Activated B cell treated with CpG ODN at 0.5 μM for 24 hours (primary cell): ENCODE measurements at regions of chr5 and their contacts with region 1.

Region 1: GRCh38 chr5:73448463-73449136 is at the start of gene FOXD1:
- DNase-seq: peak; percentile 54
- ATAC-seq: peak; percentile 61
- H3K4me3 Mint-ChIP-seq: peak within 1 kb of the TSS; percentile 88
- H3K27ac Mint-ChIP-seq: peak within 1 kb of the TSS; percentile 50
- H3K4me1 Mint-ChIP-seq: peaks cover 16% of the 10 kb centered on the region
- H3K27me3 Mint-ChIP-seq: peaks cover 63% of the 10 kb centered on the region
- CTCF ChIP-seq: no peak
- total RNA-seq, gene FOXD1: 0.09 and 0.10 TPM in 2 replicates

Region 2: DNA sequence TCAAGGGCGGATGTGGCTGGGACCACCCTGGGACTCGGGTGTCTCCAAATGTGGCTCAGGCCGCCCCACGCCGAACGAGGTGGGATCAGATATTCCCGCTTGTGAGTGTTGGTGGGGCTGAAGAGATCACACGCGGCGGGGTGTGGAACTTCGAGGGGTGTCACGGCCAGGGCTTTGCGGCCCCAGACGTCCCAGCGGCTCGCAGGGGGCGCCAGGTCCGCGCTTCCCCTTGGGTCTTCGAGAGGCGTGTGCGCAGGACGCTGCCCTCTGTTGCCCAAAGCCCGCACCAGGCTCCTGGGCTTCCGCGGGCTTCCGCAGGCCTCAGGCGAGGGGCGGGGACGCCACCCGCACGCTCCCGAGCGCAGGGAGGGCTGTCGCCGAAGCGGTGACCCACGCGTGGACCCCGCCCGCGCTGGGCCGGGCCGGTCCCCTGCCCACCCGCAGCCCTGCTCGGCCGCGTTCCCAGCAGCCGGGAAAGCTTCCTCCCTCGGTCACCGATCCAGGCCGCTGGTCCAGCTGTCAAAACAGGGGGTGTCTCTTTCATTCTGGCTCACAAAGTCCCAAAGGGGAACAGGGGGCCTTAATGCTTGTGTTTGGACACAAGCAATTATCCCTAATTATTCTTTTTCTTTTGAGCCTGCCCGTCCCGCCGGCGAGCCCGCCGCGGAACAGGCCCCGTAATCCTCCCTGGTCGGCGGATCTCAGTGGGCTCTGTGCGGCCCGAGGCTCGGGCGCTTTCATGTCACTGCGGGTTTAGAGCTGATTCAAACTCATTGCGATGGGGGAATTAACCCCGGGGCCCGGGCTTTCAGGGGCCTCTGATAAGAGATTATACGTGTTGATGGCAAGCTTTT is 215.0 kb before region 1 on chr5:
- CTCF ChIA-PET with region 1: no interaction called
- POLR2A ChIA-PET with region 1: no interaction called
- intact Hi-C with region 1: loop called (anchors 5 kb)
- DNase-seq: no peak
- ATAC-seq: no peak
- H3K4me3 Mint-ChIP-seq: peak overlapping the region; percentile 63
- H3K27ac Mint-ChIP-seq: no peak overlapping the region
- H3K4me1 Mint-ChIP-seq: peaks cover 25% of the 10 kb centered on the region
- H3K27me3 Mint-ChIP-seq: peaks cover 53% of the 10 kb centered on the region
- CTCF ChIP-seq: no peak

Region 3: GRCh38 chr5:73280821-73281746 is 167.5 kb before region 1 on chr5:
- CTCF ChIA-PET with region 1: no interaction called
- POLR2A ChIA-PET with region 1: no interaction called
- intact Hi-C with region 1: no loop called
- DNase-seq: no peak
- ATAC-seq: no peak
- H3K4me3 Mint-ChIP-seq: no peak overlapping the region
- H3K27ac Mint-ChIP-seq: no peak overlapping the region
- H3K4me1 Mint-ChIP-seq: no peaks in the 10 kb centered on the region
- H3K27me3 Mint-ChIP-seq: peaks cover 35% of the 10 kb centered on the region
- CTCF ChIP-seq: no peak

Region 4: GRCh38 chr5:73298772-73299630 is 149.6 kb before region 1 on chr5:
- CTCF ChIA-PET with region 1: no interaction called
- POLR2A ChIA-PET with region 1: no interaction called
- intact Hi-C with region 1: loop called (anchors 2 kb)
- DNase-seq: no peak
- ATAC-seq: no peak
- H3K4me3 Mint-ChIP-seq: no peak overlapping the region
- H3K27ac Mint-ChIP-seq: no peak overlapping the region
- H3K4me1 Mint-ChIP-seq: peaks cover 17% of the 10 kb centered on the region
- H3K27me3 Mint-ChIP-seq: peaks cover 81% of the 10 kb centered on the region
- CTCF ChIP-seq: no peak

Region 5: DNA sequence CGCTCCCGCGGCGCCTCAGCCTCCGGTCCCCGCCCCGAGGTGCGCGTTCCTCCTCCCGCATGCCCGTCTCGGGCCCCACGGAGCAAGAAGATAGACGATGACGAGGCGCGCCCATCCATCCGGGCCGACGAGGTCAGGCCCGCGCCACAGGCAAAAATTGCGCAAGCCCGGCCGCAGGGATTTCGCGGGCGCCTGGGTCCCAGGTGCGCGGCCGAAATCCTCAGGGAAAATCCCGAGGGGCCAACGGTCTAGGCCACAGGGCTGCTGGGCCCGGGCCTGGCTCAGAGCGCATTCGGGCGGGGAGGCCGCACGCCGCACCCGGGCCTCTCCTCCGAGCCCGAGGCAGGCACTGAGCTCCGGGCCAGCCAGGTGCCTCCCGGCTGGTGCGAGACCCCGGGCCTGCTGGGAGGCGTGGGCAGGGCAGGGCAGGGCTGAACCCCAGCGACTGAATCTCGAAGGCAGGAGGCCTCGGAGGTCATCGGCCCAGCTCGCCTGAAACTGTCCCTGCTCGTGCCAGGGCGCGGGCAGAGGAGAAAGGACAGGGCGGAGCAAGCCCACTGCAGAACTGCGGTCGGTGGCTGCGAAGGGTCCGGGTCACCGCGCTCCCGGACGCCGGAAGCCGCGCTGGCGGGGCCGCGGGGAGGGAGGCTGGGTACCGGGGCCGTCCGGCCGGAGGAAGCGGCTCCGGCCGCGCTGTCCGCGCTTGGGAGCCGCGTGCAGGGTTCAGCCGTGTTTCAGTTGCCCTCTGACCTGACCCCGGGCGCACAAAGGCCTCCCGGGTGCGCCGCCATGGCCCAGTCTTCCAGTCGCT is 66.8 kb before region 1 on chr5:
- CTCF ChIA-PET with region 1: no interaction called
- POLR2A ChIA-PET with region 1: no interaction called
- intact Hi-C with region 1: loop called (anchors 5 kb)
- DNase-seq: no peak
- ATAC-seq: no peak
- H3K4me3 Mint-ChIP-seq: no peak overlapping the region
- H3K27ac Mint-ChIP-seq: no peak overlapping the region
- H3K4me1 Mint-ChIP-seq: no peaks in the 10 kb centered on the region
- H3K27me3 Mint-ChIP-seq: peaks cover 64% of the 10 kb centered on the region
- CTCF ChIP-seq: no peak

Region 6: DNA sequence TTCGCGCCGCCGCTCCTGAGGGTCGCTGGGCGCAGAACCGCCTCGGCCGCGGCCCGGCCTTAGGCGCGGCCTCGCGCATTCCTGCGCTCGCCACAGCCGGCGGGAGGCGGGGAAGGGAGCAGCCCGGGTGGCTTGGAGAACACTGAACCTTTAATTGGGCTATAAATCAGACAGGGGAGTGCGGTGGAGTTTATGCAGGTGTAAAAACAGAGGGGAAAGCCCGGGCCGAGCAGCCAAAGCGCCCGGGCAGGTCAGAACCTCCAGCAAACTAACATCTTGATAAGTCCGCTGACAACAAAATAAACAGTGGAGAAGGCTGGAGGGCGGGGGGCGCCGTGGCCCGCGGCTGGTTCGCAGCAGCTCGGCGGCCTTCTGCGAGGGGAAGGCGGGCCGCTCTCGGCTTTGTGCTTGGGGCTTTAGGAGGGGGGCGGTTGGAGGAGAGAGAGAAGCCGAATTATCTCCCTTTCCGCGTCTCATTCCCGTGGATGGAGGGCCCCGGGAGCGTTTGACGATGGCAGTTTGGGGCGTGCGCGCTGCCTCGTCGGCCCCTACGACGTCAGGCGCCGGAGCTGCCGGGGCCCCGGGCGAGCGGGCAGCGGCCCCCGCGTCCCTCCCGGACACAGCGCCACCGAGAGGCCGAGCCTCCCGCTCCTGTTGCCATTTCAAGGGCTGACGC is 11.4 kb before region 1 on chr5:
- CTCF ChIA-PET with region 1: no interaction called
- POLR2A ChIA-PET with region 1: no interaction called
- intact Hi-C with region 1: loop called (anchors 1 kb)
- DNase-seq: no peak
- ATAC-seq: no peak
- H3K4me3 Mint-ChIP-seq: peak overlapping the region; percentile 63
- H3K27ac Mint-ChIP-seq: no peak overlapping the region
- H3K4me1 Mint-ChIP-seq: peaks cover 10% of the 10 kb centered on the region
- H3K27me3 Mint-ChIP-seq: peaks cover 62% of the 10 kb centered on the region
- CTCF ChIP-seq: no peak

Region 7: GRCh38 chr5:73498057-73499008 is 49.7 kb after region 1 on chr5 and contains the start of gene BTF3:
- CTCF ChIA-PET with region 1: no interaction called
- POLR2A ChIA-PET with region 1: interaction called, 7 read pairs
- intact Hi-C with region 1: loop called (anchors 1 kb)
- DNase-seq: peak; percentile 88
- ATAC-seq: peak; percentile 96
- H3K4me3 Mint-ChIP-seq: peak within 1 kb of the TSS; percentile 97
- H3K27ac Mint-ChIP-seq: peak within 1 kb of the TSS; percentile 97
- H3K4me1 Mint-ChIP-seq: peaks cover 33% of the 10 kb centered on the region
- H3K27me3 Mint-ChIP-seq: peaks cover 4% of the 10 kb centered on the region
- CTCF ChIP-seq: no peak
- total RNA-seq, gene BTF3: 753 and 798 TPM in 2 replicates